ENCODE measurements at regions of chr20 and their contacts with region 1.

Region 1: GRCh38 chr20:18188434-18188833 is 50.8 kb downstream of the KAT14 start:
- ATAC-seq: peak in 3 of 8 experiments; percentile 23 to 64 (median 53)
- H3K4me3 ChIP-seq: no peak overlapping the region
- H3K27ac ChIP-seq: no peak overlapping the region
- H3K4me1 ChIP-seq: no peaks in the 10 kb centered on the region

Region 2: GRCh38 chr20:17925141-17925939 is 263.1 kb before region 1 on chr20:
- in situ Hi-C with region 1: no loop called
- ATAC-seq: peak in 3 of 8 experiments; percentile 71 to 89 (median 77)
- H3K4me3 ChIP-seq: no peak overlapping the region
- H3K27ac ChIP-seq: no peak overlapping the region
- H3K4me1 ChIP-seq: peaks cover 0 to 4% of the 10 kb centered on the region in 2 donors

Region 3: DNA sequence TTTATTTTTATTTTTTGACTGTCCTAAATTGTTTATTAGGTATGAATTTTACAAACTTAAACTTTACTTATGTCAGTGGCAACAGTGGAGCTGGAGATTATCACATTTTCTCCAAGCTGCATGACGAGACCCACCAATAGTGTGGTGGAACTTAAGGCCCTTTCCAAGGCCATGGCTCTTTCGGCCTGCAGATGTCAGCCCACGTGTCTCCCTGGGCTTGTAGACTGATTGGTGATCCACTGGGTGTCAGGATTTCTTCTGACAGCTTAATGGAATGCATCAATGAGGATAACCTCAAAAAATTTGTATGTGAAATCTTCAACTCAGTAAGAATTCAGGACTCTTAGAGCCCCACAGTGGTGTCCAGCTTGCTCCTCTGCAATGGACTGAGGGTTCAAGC is 98.4 kb before region 1 on chr20:
- in situ Hi-C with region 1: loop called in 1 of 9 experiments (anchors 25 kb)
- ATAC-seq: no peak
- H3K4me3 ChIP-seq: no peak overlapping the region
- H3K27ac ChIP-seq: no peak overlapping the region
- H3K4me1 ChIP-seq: no peaks in the 10 kb centered on the region

Region 4: GRCh38 chr20:18288749-18289267 is 100.4 kb after region 1 on chr20:
- in situ Hi-C with region 1: no loop called
- ATAC-seq: peak in 2 of 8 experiments; percentile 8 to 30
- H3K4me3 ChIP-seq: peak overlapping the region; percentile 50 to 83 (median 66)
- H3K27ac ChIP-seq: peak overlapping the region; percentile 93 to 96
- H3K4me1 ChIP-seq: peaks cover 6 to 10% of the 10 kb centered on the region in 2 donors

Measured in motor neuron (in vitro differentiated cells).